WTC11 (cell line): ENCODE measurements at regions of chr11 and their contacts with region 1.

Region 1: DNA sequence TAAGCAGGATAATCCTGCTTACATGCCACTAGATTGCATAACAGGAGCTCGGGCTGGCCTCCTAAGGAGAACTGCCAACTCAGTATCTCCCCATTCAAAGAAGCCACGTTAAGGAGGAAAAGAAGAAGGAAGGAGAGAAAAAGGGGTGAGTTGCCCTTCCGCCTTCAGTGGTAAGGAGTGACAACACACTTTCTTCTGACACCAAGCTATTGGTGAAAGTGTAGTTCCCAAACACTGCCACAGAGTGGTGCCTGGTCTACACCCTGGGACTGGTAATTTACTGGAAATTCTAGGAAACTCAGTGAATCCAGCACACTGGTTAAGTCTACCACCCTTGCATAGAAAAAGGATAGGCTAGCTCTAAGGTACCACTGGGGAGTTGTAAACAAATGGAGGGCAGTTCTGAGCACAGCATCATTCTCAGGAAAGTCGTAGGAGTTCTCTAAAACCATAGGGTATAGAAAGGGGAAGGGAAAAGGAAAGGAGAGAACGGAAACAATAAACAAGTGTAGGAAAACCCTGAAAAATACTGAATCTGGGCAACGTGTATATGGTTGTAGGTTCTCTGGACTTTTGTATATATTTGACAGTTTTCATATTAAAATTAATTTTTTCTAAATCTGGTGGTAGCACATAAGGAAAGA is 58.2 kb downstream of the RRAS2 start:
- DNase-seq: peak; percentile 69
- ATAC-seq: peak; percentile 95
- H3K4me3 Mint-ChIP-seq: no peak overlapping the region
- H3K27ac Mint-ChIP-seq: no peak overlapping the region
- H3K4me1 Mint-ChIP-seq: peaks cover 62% of the 10 kb centered on the region
- H3K27me3 Mint-ChIP-seq: no peaks in the 10 kb centered on the region
- CTCF ChIP-seq: no peak; the same call in 1 of the 2 replicates

Region 2: GRCh38 chr11:14075118-14076078 is 225.4 kb before region 1 on chr11:
- CTCF ChIA-PET with region 1: no interaction called
- POLR2A ChIA-PET with region 1: no interaction called
- DNase-seq: peak; percentile 23
- ATAC-seq: peak; percentile 54
- H3K4me3 Mint-ChIP-seq: no peak overlapping the region
- H3K27ac Mint-ChIP-seq: no peak overlapping the region
- H3K4me1 Mint-ChIP-seq: peaks cover 26% of the 10 kb centered on the region
- H3K27me3 Mint-ChIP-seq: no peaks in the 10 kb centered on the region
- CTCF ChIP-seq: no peak

Region 3: DNA sequence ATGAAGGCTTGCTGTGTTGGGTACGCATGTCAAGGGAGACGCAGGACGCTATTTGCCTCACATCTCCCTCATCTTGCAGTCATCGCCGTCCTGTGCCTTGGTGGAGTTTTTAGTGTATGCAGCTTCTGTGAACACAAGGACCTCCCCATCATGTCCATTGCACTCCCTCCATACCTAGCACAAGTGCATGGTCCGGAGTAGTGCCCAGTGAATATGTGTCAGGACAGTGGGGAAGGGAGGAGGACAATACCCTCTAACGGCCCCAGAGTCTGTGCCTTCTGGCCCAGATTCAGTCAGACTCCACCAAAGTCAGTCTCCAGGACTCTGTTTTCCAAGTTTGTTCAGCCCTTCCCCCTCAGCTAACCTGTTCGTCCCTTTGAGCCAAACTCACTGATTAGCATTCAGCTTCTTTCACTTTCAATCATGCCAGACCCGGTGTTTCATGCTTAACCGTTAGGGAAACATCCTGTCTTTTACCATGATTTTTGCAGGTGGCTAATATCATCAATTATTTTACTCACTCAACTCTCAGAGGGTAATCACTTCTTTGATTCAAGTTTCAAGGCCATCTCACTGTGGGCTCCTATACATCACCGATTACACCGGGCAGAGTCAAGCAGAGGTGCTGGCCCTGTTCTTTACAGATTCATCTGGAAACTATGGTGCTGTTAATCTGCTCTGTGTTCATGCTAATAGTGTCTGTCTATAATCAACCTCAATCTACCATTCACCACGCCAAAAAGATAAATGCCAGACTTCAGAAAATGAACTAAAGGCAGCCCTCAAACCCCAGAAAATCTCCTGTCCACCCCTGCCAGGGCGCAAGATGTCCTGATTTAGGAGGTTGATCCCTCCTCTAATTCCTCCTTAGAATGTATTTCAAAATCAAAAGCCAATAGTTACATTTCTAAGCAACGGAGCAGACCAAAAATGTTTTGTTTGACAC is 98.3 kb before region 1 on chr11:
- CTCF ChIA-PET with region 1: no interaction called
- POLR2A ChIA-PET with region 1: no interaction called
- DNase-seq: no peak
- ATAC-seq: no peak; the same call in 1 of the 2 replicates
- H3K4me3 Mint-ChIP-seq: no peak overlapping the region
- H3K27ac Mint-ChIP-seq: no peak overlapping the region
- H3K4me1 Mint-ChIP-seq: peaks cover 11% of the 10 kb centered on the region
- H3K27me3 Mint-ChIP-seq: no peaks in the 10 kb centered on the region
- CTCF ChIP-seq: no peak

Region 4: DNA sequence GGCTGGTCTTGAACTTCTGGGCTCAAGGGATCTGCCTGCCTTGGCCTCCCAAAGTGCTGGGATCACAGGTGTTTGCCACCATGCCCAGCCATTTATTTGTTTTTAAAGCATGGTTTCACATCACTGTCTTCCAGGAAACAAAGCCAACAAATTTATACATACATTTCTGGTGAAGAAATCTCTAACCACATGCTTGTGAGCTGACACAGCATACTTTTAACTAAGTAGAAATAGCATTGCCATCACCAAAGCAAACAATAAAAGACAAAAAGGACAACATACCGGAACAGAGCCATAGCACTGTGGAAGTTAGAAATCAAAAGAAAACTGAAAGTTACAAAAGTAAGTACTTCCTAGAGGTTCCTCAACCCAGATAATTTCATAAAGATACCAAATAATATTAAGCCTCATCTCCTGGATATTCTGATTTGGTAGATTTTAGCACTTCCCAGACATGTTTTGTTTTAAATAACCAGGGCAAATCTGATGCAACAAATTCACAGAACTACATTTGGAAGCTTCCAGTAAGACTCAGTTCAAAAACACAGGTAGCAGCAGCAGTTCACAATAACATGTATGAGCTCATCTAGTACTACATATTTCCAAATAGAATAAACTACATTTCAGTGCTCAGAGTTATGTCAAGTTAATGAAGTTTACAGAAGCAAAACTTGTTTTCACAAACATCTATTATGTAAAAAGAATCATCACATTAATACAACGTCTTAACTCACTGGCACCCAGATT is 12.4 kb before region 1 on chr11:
- CTCF ChIA-PET with region 1: interaction called, 10 read pairs
- POLR2A ChIA-PET with region 1: no interaction called
- DNase-seq: no peak
- ATAC-seq: no peak
- H3K4me3 Mint-ChIP-seq: no peak overlapping the region
- H3K27ac Mint-ChIP-seq: peak overlapping the region; percentile 83
- H3K4me1 Mint-ChIP-seq: peaks cover 7% of the 10 kb centered on the region
- H3K27me3 Mint-ChIP-seq: no peaks in the 10 kb centered on the region
- CTCF ChIP-seq: no peak

Region 5: GRCh38 chr11:14336507-14337503 is 36.0 kb after region 1 on chr11:
- CTCF ChIA-PET with region 1: interaction called, 11 read pairs
- POLR2A ChIA-PET with region 1: interaction called, 3 read pairs
- DNase-seq: no peak
- ATAC-seq: no peak
- H3K4me3 Mint-ChIP-seq: peak overlapping the region; percentile 9
- H3K27ac Mint-ChIP-seq: peak overlapping the region; percentile 74
- H3K4me1 Mint-ChIP-seq: peaks cover 74% of the 10 kb centered on the region
- H3K27me3 Mint-ChIP-seq: no peaks in the 10 kb centered on the region
- CTCF ChIP-seq: no peak

Region 6: GRCh38 chr11:14358729-14359439 is 58.1 kb after region 1 on chr11 and contains the start of gene RRAS2:
- CTCF ChIA-PET with region 1: interaction called, 12 read pairs
- POLR2A ChIA-PET with region 1: interaction called, 3 read pairs
- DNase-seq: peak; percentile 85
- ATAC-seq: peak; percentile 87
- H3K4me3 Mint-ChIP-seq: peak within 1 kb of the TSS; percentile 98
- H3K27ac Mint-ChIP-seq: peak within 1 kb of the TSS; percentile 95
- H3K4me1 Mint-ChIP-seq: peaks cover 51% of the 10 kb centered on the region
- H3K27me3 Mint-ChIP-seq: no peaks in the 10 kb centered on the region
- CTCF ChIP-seq: no peak
- total RNA-seq, gene RRAS2: 161 to 164 TPM (median 164 TPM) in 3 replicates

Region 7: GRCh38 chr11:14373931-14374646 is 73.3 kb after region 1 on chr11:
- CTCF ChIA-PET with region 1: interaction called, 23 read pairs
- POLR2A ChIA-PET with region 1: no interaction called
- DNase-seq: no peak
- ATAC-seq: no peak
- H3K4me3 Mint-ChIP-seq: no peak overlapping the region
- H3K27ac Mint-ChIP-seq: no peak overlapping the region
- H3K4me1 Mint-ChIP-seq: peaks cover 22% of the 10 kb centered on the region
- H3K27me3 Mint-ChIP-seq: peaks cover 5% of the 10 kb centered on the region; the same call in 1 of the 2 replicates
- CTCF ChIP-seq: no peak

Region 8: GRCh38 chr11:14413307-14414069 is 112.7 kb after region 1 on chr11:
- CTCF ChIA-PET with region 1: interaction called, 255 read pairs
- POLR2A ChIA-PET with region 1: interaction called, 3 read pairs
- DNase-seq: peak; percentile 64
- ATAC-seq: peak; percentile 84
- H3K4me3 Mint-ChIP-seq: no peak overlapping the region
- H3K27ac Mint-ChIP-seq: peak overlapping the region; percentile 37; the same call in 1 of the 2 replicates
- H3K4me1 Mint-ChIP-seq: peaks cover 67% of the 10 kb centered on the region
- H3K27me3 Mint-ChIP-seq: no peaks in the 10 kb centered on the region; the same call in 1 of the 2 replicates
- CTCF ChIP-seq: peak; percentile 52

Region 9: DNA sequence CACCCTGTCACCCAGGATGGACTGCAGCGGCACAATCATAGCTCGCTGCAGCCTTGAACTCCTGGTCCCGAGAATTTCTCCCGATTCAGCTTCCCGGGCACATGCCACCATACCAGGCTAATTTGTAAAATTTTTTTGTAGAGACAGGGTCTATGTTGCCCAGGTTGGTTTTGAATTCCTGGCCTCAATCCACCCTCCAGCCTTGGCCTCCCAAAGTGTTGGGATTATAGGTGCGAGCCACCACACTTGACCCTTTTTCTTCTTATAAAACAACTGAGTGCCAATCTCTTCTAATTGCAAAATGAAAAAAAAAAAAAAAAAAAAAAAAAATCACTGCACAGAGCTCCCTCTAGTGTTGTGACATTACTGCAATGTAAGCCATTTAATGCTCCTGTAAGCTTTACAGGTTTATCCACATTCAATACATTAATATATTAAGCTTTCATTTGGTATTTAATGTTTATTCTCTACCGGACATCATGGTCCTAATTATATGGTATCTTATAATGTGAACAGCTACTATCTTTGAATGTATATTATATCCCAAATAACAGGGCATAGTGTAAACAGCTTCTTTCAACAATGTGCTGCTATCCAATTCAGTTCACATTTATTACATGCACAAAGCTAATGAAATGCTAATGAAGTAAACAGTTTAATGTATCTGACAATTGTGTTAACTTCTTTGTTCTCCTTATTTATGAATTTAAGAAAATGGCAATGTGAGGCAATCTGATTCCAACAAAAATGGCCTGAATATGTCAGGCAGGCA is 154.3 kb after region 1 on chr11:
- CTCF ChIA-PET with region 1: interaction called, 80 read pairs
- POLR2A ChIA-PET with region 1: interaction called, 8 read pairs
- DNase-seq: no peak
- ATAC-seq: peak; percentile 39
- H3K4me3 Mint-ChIP-seq: no peak overlapping the region
- H3K27ac Mint-ChIP-seq: no peak overlapping the region
- H3K4me1 Mint-ChIP-seq: no peaks in the 10 kb centered on the region
- H3K27me3 Mint-ChIP-seq: no peaks in the 10 kb centered on the region
- CTCF ChIP-seq: peak; percentile 40